ENCODE measurements at regions of chr1 and their contacts with region 1.

Region 1: DNA sequence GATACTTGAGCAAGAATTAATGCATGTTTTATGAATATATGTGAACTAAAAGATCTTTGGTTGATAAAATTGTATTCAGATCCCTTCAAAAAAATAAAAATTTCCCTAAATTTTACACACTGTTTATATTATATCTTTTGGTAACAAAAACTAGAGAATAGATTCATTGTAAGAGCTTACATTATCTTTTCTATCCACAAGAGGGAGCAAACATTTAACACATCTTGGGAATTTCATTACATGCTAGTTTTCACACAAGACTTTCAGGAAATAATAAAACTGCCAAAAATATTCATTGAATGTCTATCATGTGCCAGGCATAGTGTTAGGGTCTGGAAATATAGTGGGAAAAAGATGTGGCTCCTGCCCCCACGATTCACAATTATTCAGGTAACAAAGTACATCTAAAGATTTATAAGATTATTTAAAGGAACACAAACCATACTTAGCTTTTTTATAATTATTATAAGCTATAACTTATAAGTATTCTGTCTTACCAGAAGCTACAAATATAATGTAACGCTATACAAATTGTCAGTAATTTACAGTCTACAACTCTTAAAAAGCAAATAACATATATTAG is 30.6 kb downstream of the FAF1 start:
- DNase-seq: peak in 6 of 9 donors; percentile 1 to 41 (median 28)
- ATAC-seq: no peak
- H3K4me3 ChIP-seq: no peak overlapping the region
- H3K4me3 Mint-ChIP-seq: no peak overlapping the region
- H3K27ac ChIP-seq: no peak overlapping the region
- H3K27ac Mint-ChIP-seq: no peak overlapping the region
- H3K4me1 ChIP-seq: no peaks in the 10 kb centered on the region
- H3K4me1 Mint-ChIP-seq: peaks cover 13 to 43% (median 40%) of the 10 kb centered on the region in 7 donors
- H3K27me3 ChIP-seq: no peaks in the 10 kb centered on the region
- H3K27me3 Mint-ChIP-seq: no peaks in the 10 kb centered on the region

Region 2: DNA sequence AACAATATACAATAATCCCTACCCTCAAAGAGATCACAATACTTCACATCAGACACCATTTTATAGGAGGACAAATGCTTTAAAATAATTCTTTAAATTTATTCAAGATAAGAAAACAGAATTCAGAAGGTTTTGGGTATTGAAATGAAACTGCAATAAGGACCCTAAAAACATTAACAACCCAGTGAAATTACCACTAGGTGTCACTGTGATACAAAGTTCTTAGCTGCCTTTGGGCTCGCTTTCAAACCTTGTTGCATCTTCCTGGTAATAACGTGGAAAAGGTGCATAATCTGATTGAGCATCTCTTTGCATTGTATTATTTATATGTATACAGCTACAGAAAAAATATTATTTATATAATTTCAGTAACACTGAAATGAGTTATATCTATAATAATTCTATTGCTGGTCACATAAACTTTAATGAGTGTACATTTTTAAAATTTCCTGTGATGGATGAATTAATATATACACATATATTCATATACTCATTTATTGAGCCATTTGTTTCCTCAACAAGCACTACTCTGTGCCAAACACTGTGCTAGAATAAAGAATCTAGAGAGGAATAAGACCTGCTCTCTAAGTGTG is 154.6 kb before region 1 on chr1:
- CTCF ChIA-PET with region 1: interaction called, 6 read pairs
- POLR2A ChIA-PET with region 1: no interaction called
- intact Hi-C with region 1: loop called (anchors 2 to 10 kb)
- DNase-seq: peak in 7 of 9 donors; percentile 7 to 53 (median 36)
- ATAC-seq: peak; percentile 54
- H3K4me3 ChIP-seq: no peak overlapping the region
- H3K4me3 Mint-ChIP-seq: no peak overlapping the region
- H3K27ac ChIP-seq: no peak overlapping the region
- H3K27ac Mint-ChIP-seq: no peak overlapping the region
- H3K4me1 ChIP-seq: no peaks in the 10 kb centered on the region
- H3K4me1 Mint-ChIP-seq: peaks cover 4 to 22% (median 13%) of the 10 kb centered on the region in 7 donors
- H3K27me3 ChIP-seq: no peaks in the 10 kb centered on the region
- H3K27me3 Mint-ChIP-seq: no peaks in the 10 kb centered on the region

Region 3: GRCh38 chr1:50959913-50960844 is 30.7 kb after region 1 on chr1 and contains the start of gene FAF1:
- CTCF ChIA-PET with region 1: interaction called, 6 read pairs
- POLR2A ChIA-PET with region 1: interaction called, 5 read pairs
- intact Hi-C with region 1: loop called (anchors 1 to 5 kb)
- DNase-seq: peak; percentile 94 to 98 (median 98)
- ATAC-seq: peak; percentile 98
- H3K4me3 ChIP-seq: peak within 1 kb of the TSS; percentile 61
- H3K4me3 Mint-ChIP-seq: peak within 1 kb of the TSS; percentile 82 to 98 (median 92)
- H3K27ac ChIP-seq: peak within 1 kb of the TSS; percentile 71
- H3K27ac Mint-ChIP-seq: peak within 1 kb of the TSS; percentile 64 to 97 (median 96)
- H3K4me1 ChIP-seq: peaks cover 7% of the 10 kb centered on the region in 2 donors
- H3K4me1 Mint-ChIP-seq: peaks cover 14 to 35% (median 24%) of the 10 kb centered on the region in 7 donors
- H3K27me3 ChIP-seq: no peaks in the 10 kb centered on the region
- H3K27me3 Mint-ChIP-seq: peaks cover 0 to 9% (median 0%) of the 10 kb centered on the region in 5 donors
- total RNA-seq, gene FAF1: 46.4 to 66.6 (median 52.5) TPM

Region 4: GRCh38 chr1:51032902-51033301 is 103.4 kb after region 1 on chr1:
- CTCF ChIA-PET with region 1: interaction called, 11 read pairs
- POLR2A ChIA-PET with region 1: no interaction called
- intact Hi-C with region 1: no loop called
- DNase-seq: no peak
- ATAC-seq: no peak
- H3K4me3 ChIP-seq: no peak overlapping the region
- H3K4me3 Mint-ChIP-seq: no peak overlapping the region
- H3K27ac ChIP-seq: no peak overlapping the region
- H3K27ac Mint-ChIP-seq: no peak overlapping the region
- H3K4me1 ChIP-seq: no peaks in the 10 kb centered on the region
- H3K4me1 Mint-ChIP-seq: no peaks in the 10 kb centered on the region
- H3K27me3 ChIP-seq: no peaks in the 10 kb centered on the region
- H3K27me3 Mint-ChIP-seq: peaks cover 6 to 34% (median 15%) of the 10 kb centered on the region in 5 donors

Region 5: GRCh38 chr1:51139474-51139873 is 210.0 kb after region 1 on chr1:
- CTCF ChIA-PET with region 1: no interaction called
- POLR2A ChIA-PET with region 1: no interaction called
- intact Hi-C with region 1: loop called in 1 of 2 experiments (anchors 1 kb)
- DNase-seq: no peak
- ATAC-seq: no peak
- H3K4me3 ChIP-seq: no peak overlapping the region
- H3K4me3 Mint-ChIP-seq: peak overlapping the region in 1 of 10 donors; percentile 48
- H3K27ac ChIP-seq: no peak overlapping the region
- H3K27ac Mint-ChIP-seq: no peak overlapping the region
- H3K4me1 ChIP-seq: no peaks in the 10 kb centered on the region
- H3K4me1 Mint-ChIP-seq: no peaks in the 10 kb centered on the region
- H3K27me3 ChIP-seq: no peaks in the 10 kb centered on the region
- H3K27me3 Mint-ChIP-seq: peaks cover 5 to 34% (median 28%) of the 10 kb centered on the region in 5 donors